ENCODE measurements at regions of chr4 and their contacts with region 1.

Region 1: GRCh38 chr4:73069338-73070073 is at the start of gene COX18:
- DNase-seq: peak; percentile 94 to 96 (median 95)
- H3K4me3 ChIP-seq: peak within 1 kb of the TSS; percentile 89 to 93
- H3K4me3 Mint-ChIP-seq: peak within 1 kb of the TSS; percentile 88 to 94 (median 91)
- H3K27ac ChIP-seq: peak within 1 kb of the TSS; percentile 97
- H3K27ac Mint-ChIP-seq: peak within 1 kb of the TSS; percentile 94 to 100 (median 99)
- H3K4me1 ChIP-seq: peaks cover 27% of the 10 kb centered on the region
- H3K4me1 Mint-ChIP-seq: peaks cover 26 to 55% (median 37%) of the 10 kb centered on the region in 4 donors
- H3K27me3 ChIP-seq: no peaks in the 10 kb centered on the region
- H3K27me3 Mint-ChIP-seq: no peaks in the 10 kb centered on the region
- total RNA-seq, gene COX18: 14.4 to 14.6 TPM

Region 2: GRCh38 chr4:73080789-73081188 is 11.3 kb after region 1 on chr4:
- CTCF ChIA-PET with region 1: no interaction called
- POLR2A ChIA-PET with region 1: interaction called, 17 read pairs
- intact Hi-C with region 1: no loop called
- DNase-seq: no peak
- H3K4me3 ChIP-seq: no peak overlapping the region
- H3K4me3 Mint-ChIP-seq: no peak overlapping the region
- H3K27ac ChIP-seq: no peak overlapping the region
- H3K27ac Mint-ChIP-seq: peak overlapping the region; percentile 20 to 90 (median 42)
- H3K4me1 ChIP-seq: no peaks in the 10 kb centered on the region
- H3K4me1 Mint-ChIP-seq: peaks cover 8 to 12% (median 10%) of the 10 kb centered on the region in 4 donors
- H3K27me3 ChIP-seq: no peaks in the 10 kb centered on the region
- H3K27me3 Mint-ChIP-seq: no peaks in the 10 kb centered on the region

Region 3: GRCh38 chr4:73086095-73086868 is 16.8 kb after region 1 on chr4:
- CTCF ChIA-PET with region 1: no interaction called
- POLR2A ChIA-PET with region 1: interaction called, 17 read pairs
- intact Hi-C with region 1: loop called (anchors 2 kb)
- DNase-seq: peak in 3 of 5 donors; percentile 7 to 19 (median 15)
- H3K4me3 ChIP-seq: no peak overlapping the region
- H3K4me3 Mint-ChIP-seq: peak overlapping the region; percentile 70 to 78 (median 74)
- H3K27ac ChIP-seq: peak overlapping the region; percentile 46
- H3K27ac Mint-ChIP-seq: peak overlapping the region in 6 of 7 donors; percentile 68 to 87 (median 82)
- H3K4me1 ChIP-seq: no peaks in the 10 kb centered on the region
- H3K4me1 Mint-ChIP-seq: peaks cover 5 to 12% (median 8%) of the 10 kb centered on the region in 4 donors
- H3K27me3 ChIP-seq: no peaks in the 10 kb centered on the region
- H3K27me3 Mint-ChIP-seq: no peaks in the 10 kb centered on the region

Region 4: GRCh38 chr4:73109493-73109892 is 40.0 kb after region 1 on chr4:
- CTCF ChIA-PET with region 1: no interaction called
- POLR2A ChIA-PET with region 1: no interaction called
- intact Hi-C with region 1: loop called (anchors 5 kb)
- DNase-seq: no peak
- H3K4me3 ChIP-seq: no peak overlapping the region
- H3K4me3 Mint-ChIP-seq: no peak overlapping the region
- H3K27ac ChIP-seq: no peak overlapping the region
- H3K27ac Mint-ChIP-seq: no peak overlapping the region
- H3K4me1 ChIP-seq: no peaks in the 10 kb centered on the region
- H3K4me1 Mint-ChIP-seq: peaks cover 0 to 5% (median 0%) of the 10 kb centered on the region in 4 donors
- H3K27me3 ChIP-seq: no peaks in the 10 kb centered on the region
- H3K27me3 Mint-ChIP-seq: no peaks in the 10 kb centered on the region

Region 5: DNA sequence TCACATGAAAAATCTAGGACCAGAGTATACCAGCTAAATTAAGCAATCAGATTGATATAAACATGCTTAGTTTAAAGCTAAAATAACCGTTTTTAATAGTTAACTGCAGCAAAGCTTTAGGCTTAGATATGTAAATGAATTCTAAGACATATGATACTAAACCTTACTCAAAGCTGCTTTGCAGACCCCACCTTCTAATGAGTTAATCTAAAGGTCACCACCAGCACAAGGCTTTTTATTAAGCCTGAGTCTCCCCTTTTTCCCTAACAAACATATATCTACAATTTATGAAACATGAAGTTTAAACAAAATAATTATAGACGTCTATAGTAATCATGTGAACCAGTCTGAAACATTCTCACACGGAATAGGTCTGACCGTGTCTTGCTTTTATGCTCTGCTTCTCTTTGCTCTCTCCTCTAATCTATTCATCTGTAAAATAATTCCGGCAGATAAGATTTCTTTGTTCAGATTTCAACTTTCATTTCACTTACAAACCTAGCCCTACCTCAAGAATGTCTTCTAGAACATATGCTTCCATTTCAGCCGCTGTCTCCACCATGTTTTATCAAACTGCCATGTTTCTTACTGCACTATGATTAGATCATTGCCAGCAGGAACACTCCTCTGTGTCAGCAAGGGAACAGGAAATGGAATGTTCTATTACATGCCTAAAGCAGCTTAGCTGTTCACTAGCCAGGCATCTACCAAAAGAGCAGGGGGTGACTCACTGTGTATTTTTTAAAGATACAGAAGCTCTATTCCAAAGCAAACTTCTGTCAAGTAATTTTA is 153.2 kb after region 1 on chr4:
- CTCF ChIA-PET with region 1: no interaction called
- POLR2A ChIA-PET with region 1: interaction called, 9 read pairs
- intact Hi-C with region 1: loop called (anchors 1 kb)
- DNase-seq: peak; percentile 77 to 88 (median 85)
- H3K4me3 ChIP-seq: peak overlapping the region; percentile 54 to 91
- H3K4me3 Mint-ChIP-seq: no peak overlapping the region
- H3K27ac ChIP-seq: peak overlapping the region; percentile 89
- H3K27ac Mint-ChIP-seq: no peak overlapping the region
- H3K4me1 ChIP-seq: peaks cover 50% of the 10 kb centered on the region
- H3K4me1 Mint-ChIP-seq: peaks cover 24 to 49% (median 30%) of the 10 kb centered on the region in 4 donors
- H3K27me3 ChIP-seq: no peaks in the 10 kb centered on the region
- H3K27me3 Mint-ChIP-seq: no peaks in the 10 kb centered on the region

Measured in CD4-positive, alpha-beta memory T cell (primary cell).